Activated naive CD4-positive, alpha-beta T cell treated with anti-CD3 and anti-CD28 coated beads, Interleukin-2, amount 10 ng/mL, durations not matched to agents 7 days and 5 days (primary cell): ENCODE measurements at regions of chr18 and their contacts with region 1.

Region 1: GRCh38 chr18:70085641-70086040 is 119.8 kb downstream of the RTTN start:
- DNase-seq: no peak
- H3K4me3 Mint-ChIP-seq: no peak overlapping the region
- H3K27ac Mint-ChIP-seq: no peak overlapping the region
- H3K4me1 Mint-ChIP-seq: no peaks in the 10 kb centered on the region
- H3K27me3 Mint-ChIP-seq: no peaks in the 10 kb centered on the region

Region 2: GRCh38 chr18:69636529-69637301 is 448.9 kb before region 1 on chr18:
- CTCF ChIA-PET with region 1: interaction called, 13 read pairs
- DNase-seq: peak; percentile 42
- H3K4me3 Mint-ChIP-seq: no peak overlapping the region
- H3K27ac Mint-ChIP-seq: no peak overlapping the region
- H3K4me1 Mint-ChIP-seq: no peaks in the 10 kb centered on the region
- H3K27me3 Mint-ChIP-seq: peaks cover 4% of the 10 kb centered on the region

Region 3: DNA sequence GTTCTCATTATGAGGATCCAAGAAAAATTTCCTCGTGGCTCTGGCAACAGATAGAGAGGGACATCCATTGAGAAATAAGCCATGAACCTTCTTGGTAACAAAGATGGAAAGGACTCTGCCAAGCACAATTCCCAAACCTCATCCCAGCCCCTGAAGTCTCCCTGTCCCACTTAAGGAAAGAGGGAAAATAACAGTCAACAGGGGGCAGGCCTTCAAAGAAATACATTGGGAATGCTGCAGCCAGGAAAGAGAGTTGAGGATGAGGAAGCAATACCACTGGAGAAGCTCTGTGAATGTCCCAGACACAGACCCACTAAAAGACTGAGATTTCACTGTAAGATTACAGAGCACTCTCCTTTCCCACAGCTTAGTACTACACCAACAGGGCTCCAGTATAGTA is 231.2 kb before region 1 on chr18:
- CTCF ChIA-PET with region 1: no interaction called
- DNase-seq: no peak
- H3K4me3 Mint-ChIP-seq: no peak overlapping the region
- H3K27ac Mint-ChIP-seq: no peak overlapping the region
- H3K4me1 Mint-ChIP-seq: no peaks in the 10 kb centered on the region
- H3K27me3 Mint-ChIP-seq: no peaks in the 10 kb centered on the region

Region 4: DNA sequence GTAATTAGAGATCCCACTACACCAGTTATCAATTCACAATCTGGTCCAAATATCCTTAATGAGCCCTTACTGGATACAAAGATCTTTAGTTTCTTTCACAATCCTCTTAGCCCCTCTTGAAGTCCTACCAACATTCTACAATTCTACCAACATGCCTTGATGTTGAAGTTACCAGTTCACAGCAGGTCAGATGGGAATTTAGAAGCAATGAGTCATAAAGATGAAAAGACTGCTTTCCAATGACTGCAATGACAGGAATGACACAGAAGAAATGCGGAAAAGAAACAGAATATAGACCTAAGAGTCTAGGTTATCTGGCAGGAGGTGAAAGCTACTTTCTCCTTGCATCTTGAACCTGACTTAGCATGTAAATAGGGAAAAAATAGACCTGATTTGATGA is 95.4 kb after region 1 on chr18:
- CTCF ChIA-PET with region 1: no interaction called
- DNase-seq: no peak
- H3K4me3 Mint-ChIP-seq: no peak overlapping the region
- H3K27ac Mint-ChIP-seq: no peak overlapping the region
- H3K4me1 Mint-ChIP-seq: peaks cover 6% of the 10 kb centered on the region
- H3K27me3 Mint-ChIP-seq: no peaks in the 10 kb centered on the region